Activated CD8-positive, alpha-beta memory T cell treated with anti-CD3 and anti-CD28 coated beads, Interleukin-2, amount 10 ng/mL, durations not matched to agents 7 days and 5 days (primary cell): ENCODE measurements at regions of chr7 and their contacts with region 1.

Region 1: DNA sequence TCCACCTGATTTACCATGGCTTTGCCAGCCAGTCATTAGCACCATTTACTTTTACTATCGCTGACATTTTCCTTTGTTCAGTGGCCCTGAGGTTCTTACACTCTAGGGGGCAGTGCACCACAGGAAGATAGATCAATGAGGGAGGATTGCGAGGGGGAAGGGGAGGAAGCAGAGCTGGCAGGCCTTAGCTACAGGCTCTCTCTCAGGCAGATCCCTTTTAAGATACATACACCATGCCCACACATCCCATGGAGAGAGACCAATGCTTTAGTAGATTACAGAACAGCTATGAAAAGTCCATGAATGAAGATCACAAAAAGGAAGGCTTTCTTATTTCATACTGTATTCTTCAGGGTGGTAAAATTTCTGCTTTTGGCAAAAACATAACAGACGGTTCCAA is 47.4 kb downstream of the DENND11 start:
- DNase-seq: peak; percentile 80
- ATAC-seq: peak; percentile 94
- H3K4me3 Mint-ChIP-seq: no peak overlapping the region
- H3K27ac Mint-ChIP-seq: peak overlapping the region; percentile 57
- H3K4me1 Mint-ChIP-seq: peaks cover 5% of the 10 kb centered on the region
- H3K27me3 Mint-ChIP-seq: no peaks in the 10 kb centered on the region

Region 2: DNA sequence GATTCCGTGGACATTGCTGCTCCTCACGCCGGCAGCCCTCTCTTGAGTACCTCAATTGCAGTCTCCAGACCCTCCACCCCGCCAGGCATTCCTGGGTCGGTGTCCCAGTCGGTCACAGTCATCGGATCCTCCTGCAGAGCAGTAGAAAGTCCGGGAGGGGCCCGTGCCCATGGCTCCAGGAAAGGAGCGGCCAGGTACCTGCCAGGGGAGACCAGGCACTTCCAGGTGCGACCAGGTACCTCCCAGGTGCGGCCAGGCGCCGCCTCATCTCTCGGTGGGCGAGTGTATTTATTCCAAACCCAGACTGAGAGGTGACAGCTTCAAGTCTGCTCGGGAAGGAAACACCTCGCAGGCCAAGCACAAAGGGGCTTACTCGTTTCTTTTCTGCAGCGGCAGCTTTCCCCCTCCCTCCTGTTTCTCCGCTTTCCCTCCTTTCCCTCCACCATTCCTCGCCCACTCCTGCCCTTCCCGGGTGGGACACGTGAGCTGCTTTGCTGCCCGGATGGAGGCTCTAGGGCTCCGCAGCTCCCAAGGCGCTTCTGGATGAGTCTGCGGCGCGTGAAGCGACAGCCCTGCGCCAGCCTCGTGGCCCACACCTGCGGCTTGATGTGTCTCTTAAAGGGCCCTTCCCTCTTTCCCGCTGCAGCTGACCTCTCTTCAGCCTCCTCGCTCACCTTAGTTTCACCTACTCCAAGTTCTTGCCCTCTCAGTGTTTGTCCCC is 142.7 kb before region 1 on chr7:
- CTCF ChIA-PET with region 1: no interaction called
- DNase-seq: peak; percentile 41
- ATAC-seq: peak; percentile 30
- H3K4me3 Mint-ChIP-seq: peak overlapping the region; percentile 43
- H3K27ac Mint-ChIP-seq: no peak overlapping the region
- H3K4me1 Mint-ChIP-seq: peaks cover 18% of the 10 kb centered on the region
- H3K27me3 Mint-ChIP-seq: peaks cover 70% of the 10 kb centered on the region

Region 3: DNA sequence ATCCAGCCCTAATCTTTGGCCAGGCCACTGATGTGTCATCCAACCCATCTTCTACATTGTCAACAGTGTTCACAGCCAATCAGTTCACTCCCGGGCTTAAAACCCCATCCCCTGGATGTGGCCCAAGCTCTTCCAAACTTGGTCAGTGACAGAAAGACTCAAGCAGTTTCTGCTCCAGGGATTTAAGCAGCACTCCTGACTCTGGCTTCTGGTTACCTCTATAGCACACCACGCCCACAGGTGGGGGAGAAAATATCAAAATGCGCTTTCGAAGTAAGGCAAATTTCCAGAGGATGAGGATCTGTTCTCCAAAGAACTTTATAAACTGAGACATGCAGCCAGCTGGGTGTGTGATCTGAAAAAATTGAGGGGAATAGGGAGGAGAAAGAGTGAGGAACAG is 11.5 kb after region 1 on chr7:
- CTCF ChIA-PET with region 1: interaction called, 10 read pairs
- DNase-seq: no peak
- ATAC-seq: no peak
- H3K4me3 Mint-ChIP-seq: no peak overlapping the region
- H3K27ac Mint-ChIP-seq: no peak overlapping the region
- H3K4me1 Mint-ChIP-seq: peaks cover 19% of the 10 kb centered on the region
- H3K27me3 Mint-ChIP-seq: no peaks in the 10 kb centered on the region

Region 4: GRCh38 chr7:141688043-141688442 is 33.5 kb after region 1 on chr7:
- CTCF ChIA-PET with region 1: no interaction called
- DNase-seq: no peak
- ATAC-seq: no peak
- H3K4me3 Mint-ChIP-seq: no peak overlapping the region
- H3K27ac Mint-ChIP-seq: no peak overlapping the region
- H3K4me1 Mint-ChIP-seq: peaks cover 21% of the 10 kb centered on the region
- H3K27me3 Mint-ChIP-seq: no peaks in the 10 kb centered on the region

Region 5: GRCh38 chr7:141785706-141786552 is 131.4 kb after region 1 on chr7:
- CTCF ChIA-PET with region 1: interaction called, 10 read pairs
- DNase-seq: peak; percentile 44
- ATAC-seq: peak; percentile 61
- H3K4me3 Mint-ChIP-seq: no peak overlapping the region
- H3K27ac Mint-ChIP-seq: no peak overlapping the region
- H3K4me1 Mint-ChIP-seq: peaks cover 1% of the 10 kb centered on the region
- H3K27me3 Mint-ChIP-seq: no peaks in the 10 kb centered on the region